ENCODE measurements at regions of chr6 and their contacts with region 1.

Region 1: DNA sequence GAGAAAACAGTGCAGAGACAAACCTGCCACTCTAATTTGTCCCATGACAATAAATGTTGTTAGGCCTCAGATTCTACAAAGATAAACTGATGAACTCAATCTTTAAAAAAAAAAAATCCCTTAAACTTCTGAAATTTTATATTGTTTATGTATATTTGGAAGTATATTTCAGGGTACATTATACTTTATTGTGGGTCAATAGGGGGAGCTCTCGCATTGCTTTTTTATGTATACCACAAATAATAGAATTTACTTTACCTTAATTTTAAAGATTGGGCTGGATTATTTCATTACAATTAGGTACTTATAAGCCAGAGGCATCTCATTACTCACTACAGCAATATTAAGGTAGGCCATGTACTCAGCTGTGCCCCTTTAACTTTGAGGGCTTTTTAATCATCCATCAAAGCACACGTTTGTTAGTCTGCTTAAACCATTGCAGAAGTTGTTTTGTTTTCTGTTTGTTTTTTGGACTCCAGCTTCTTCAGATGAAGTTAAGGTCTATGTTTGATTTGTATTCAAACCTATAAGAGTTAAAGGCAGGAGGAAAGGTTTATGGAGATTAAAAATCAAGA is 56.3 kb upstream of the EYA4 start:
- DNase-seq: no peak
- H3K4me3 ChIP-seq: no peak overlapping the region
- H3K27me3 ChIP-seq: no peaks in the 10 kb centered on the region; the same call in 1 of the 2 replicates
- CTCF ChIP-seq: peak; percentile 52

Region 2: GRCh38 chr6:133170600-133170999 is 14.3 kb before region 1 on chr6:
- CTCF ChIA-PET with region 1: interaction called, 10 read pairs
- POLR2A ChIA-PET with region 1: no interaction called
- DNase-seq: no peak
- H3K4me3 ChIP-seq: no peak overlapping the region
- H3K27me3 ChIP-seq: no peaks in the 10 kb centered on the region; the same call in 1 of the 2 replicates
- CTCF ChIP-seq: no peak

Region 3: GRCh38 chr6:133551847-133552341 is 367.0 kb after region 1 on chr6:
- CTCF ChIA-PET with region 1: interaction called, 14 read pairs
- POLR2A ChIA-PET with region 1: no interaction called
- DNase-seq: peak; percentile 93
- H3K4me3 ChIP-seq: no peak overlapping the region
- H3K27me3 ChIP-seq: no peaks in the 10 kb centered on the region; the same call in 1 of the 2 replicates
- CTCF ChIP-seq: no peak

Measured in BJ (cell line).